Vagina (tissue), 2 donors: ENCODE measurements at regions of chr10 and their contacts with region 1.

Region 1: GRCh38 chr10:4283846-4284610 is 499.0 kb upstream of the KLF6 start:
- DNase-seq: no peak
- H3K4me3 ChIP-seq: no peak overlapping the region
- H3K27ac ChIP-seq: peak overlapping the region; percentile 85
- H3K4me1 ChIP-seq: peaks cover 46% of the 10 kb centered on the region
- H3K27me3 ChIP-seq: no peaks in the 10 kb centered on the region
- CTCF ChIP-seq: no peak
- POLR2A ChIP-seq: no peak

Region 2: DNA sequence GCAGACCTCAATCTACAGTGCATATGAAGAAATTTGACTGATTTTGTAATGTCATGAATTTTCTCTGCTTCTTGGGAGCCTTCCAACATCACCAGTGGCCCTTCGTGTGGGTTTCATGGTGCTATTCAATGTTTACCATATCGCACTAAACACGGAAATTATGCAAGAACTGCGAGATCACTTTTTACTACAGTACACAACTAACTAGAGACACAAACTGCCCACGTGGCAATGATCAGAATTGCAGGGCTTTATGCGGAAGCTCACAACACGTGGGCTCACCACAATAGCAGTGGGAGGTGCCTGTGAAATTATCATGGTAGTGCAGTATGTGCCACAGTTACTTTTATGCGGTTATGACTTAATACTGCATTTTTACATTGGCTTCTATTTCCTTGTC is 49.4 kb before region 1 on chr10:
- intact Hi-C with region 1: no loop called
- DNase-seq: no peak
- H3K4me3 ChIP-seq: no peak overlapping the region
- H3K27ac ChIP-seq: no peak overlapping the region
- H3K4me1 ChIP-seq: no peaks in the 10 kb centered on the region
- H3K27me3 ChIP-seq: no peaks in the 10 kb centered on the region
- CTCF ChIP-seq: no peak
- POLR2A ChIP-seq: no peak

Region 3: GRCh38 chr10:4333459-4333894 is 49.4 kb after region 1 on chr10:
- intact Hi-C with region 1: no loop called
- DNase-seq: no peak
- H3K4me3 ChIP-seq: no peak overlapping the region
- H3K27ac ChIP-seq: no peak overlapping the region
- H3K4me1 ChIP-seq: no peaks in the 10 kb centered on the region
- H3K27me3 ChIP-seq: no peaks in the 10 kb centered on the region
- CTCF ChIP-seq: no peak
- POLR2A ChIP-seq: no peak

Region 4: GRCh38 chr10:4391683-4392082 is 107.7 kb after region 1 on chr10:
- intact Hi-C with region 1: no loop called
- DNase-seq: no peak
- H3K4me3 ChIP-seq: no peak overlapping the region
- H3K27ac ChIP-seq: no peak overlapping the region
- H3K4me1 ChIP-seq: no peaks in the 10 kb centered on the region
- H3K27me3 ChIP-seq: no peaks in the 10 kb centered on the region
- CTCF ChIP-seq: no peak
- POLR2A ChIP-seq: no peak

Region 5: GRCh38 chr10:4498711-4499251 is 214.8 kb after region 1 on chr10:
- intact Hi-C with region 1: loop called (anchors 1 kb)
- DNase-seq: no peak
- H3K4me3 ChIP-seq: no peak overlapping the region
- H3K27ac ChIP-seq: peak overlapping the region; percentile 82
- H3K4me1 ChIP-seq: peaks cover 15% of the 10 kb centered on the region
- H3K27me3 ChIP-seq: no peaks in the 10 kb centered on the region
- CTCF ChIP-seq: no peak
- POLR2A ChIP-seq: no peak